ENCODE measurements at regions of chr15 and their contacts with region 1.

Region 1: DNA sequence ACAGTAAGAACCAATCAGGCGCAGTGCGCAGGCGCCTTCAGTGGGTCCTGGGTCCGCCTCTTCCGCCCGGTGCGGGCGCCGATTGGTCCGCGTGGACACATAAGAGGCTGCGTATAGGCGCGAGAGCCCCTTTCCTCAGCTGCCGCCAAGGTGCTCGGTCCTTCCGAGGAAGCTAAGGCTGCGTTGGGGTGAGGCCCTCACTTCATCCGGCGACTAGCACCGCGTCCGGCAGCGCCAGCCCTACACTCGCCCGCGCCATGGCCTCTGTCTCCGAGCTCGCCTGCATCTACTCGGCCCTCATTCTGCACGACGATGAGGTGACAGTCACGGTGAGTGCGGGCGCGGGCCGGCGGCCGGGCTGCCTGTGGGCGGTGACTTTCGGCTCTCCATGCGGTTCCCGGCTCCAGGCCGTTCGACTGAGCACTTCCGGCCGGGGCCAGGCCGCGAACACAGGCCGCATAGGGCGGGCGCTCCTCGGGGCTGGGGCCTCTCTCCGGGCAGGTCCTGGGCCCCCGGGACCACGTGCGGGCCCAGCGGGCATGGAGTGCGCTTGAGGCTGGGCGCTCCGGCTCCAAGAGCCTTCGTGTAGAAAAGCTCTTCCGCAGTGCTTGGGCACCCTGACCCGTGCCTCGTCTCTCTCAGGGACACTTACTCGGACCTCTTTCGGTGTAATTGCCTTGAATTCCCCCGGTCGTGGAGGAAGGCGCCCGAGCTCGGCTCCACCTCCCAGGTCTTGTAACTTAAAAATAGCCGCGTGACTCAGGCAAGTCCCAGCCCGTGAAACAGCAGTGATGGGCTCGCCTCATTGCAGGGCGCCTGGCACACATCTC is at the start of gene RPLP1:
- H3K4me3 Mint-ChIP-seq: peak within 1 kb of the TSS; percentile 96
- H3K27ac Mint-ChIP-seq: peak within 1 kb of the TSS; percentile 91
- H3K4me1 Mint-ChIP-seq: peaks cover 34% of the 10 kb centered on the region
- H3K27me3 Mint-ChIP-seq: no peaks in the 10 kb centered on the region

Region 2: GRCh38 chr15:69407753-69408385 is 45.0 kb before region 1 on chr15:
- intact Hi-C with region 1: loop called (anchors 2 kb)
- H3K4me3 Mint-ChIP-seq: no peak overlapping the region
- H3K27ac Mint-ChIP-seq: no peak overlapping the region
- H3K4me1 Mint-ChIP-seq: no peaks in the 10 kb centered on the region
- H3K27me3 Mint-ChIP-seq: no peaks in the 10 kb centered on the region

Region 3: DNA sequence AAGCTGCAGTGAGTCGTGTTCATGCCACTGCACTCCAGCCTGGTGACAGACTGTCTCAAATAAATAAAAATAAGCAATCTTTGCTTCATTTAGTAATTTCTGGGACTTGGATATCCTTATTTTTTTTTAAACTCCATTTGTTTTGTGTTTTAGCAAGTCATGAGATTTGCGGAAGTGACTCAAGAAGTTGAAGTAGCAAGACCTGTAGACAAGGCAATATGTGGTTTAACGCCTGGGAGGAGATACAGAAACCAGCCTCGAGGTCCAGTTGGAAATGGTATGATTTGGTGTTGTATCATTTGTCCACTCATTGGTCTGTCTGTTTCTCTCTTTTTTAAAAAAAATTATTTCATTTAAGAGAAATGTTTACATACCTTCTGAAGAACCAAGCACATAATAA is 16.9 kb before region 1 on chr15:
- intact Hi-C with region 1: loop called (anchors 2 kb)
- H3K4me3 Mint-ChIP-seq: no peak overlapping the region
- H3K27ac Mint-ChIP-seq: peak overlapping the region; percentile 86
- H3K4me1 Mint-ChIP-seq: peaks cover 42% of the 10 kb centered on the region
- H3K27me3 Mint-ChIP-seq: no peaks in the 10 kb centered on the region